ENCODE measurements at regions of chr11 and their contacts with region 1.

Region 1: DNA sequence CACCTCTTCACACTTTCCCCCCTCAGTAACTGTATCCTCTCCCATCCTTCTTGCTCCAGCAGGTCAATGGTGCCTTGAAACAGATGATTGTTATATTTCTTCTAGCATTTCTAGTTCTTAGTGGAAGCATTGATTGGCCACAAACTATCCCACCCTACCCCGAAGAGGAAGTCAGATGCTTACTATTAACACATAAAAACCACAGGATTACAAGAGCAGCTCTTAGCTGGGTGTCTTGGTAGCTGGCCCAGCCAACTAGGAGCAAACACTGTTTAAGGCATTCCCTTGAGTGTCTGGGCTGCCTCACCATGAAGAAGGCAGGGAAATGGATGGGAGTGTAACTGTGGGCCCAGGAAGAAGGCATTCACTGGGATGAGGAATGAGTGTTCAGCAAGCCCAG is 176.6 kb downstream of the GRIK4 start:
- DNase-seq: no peak
- H3K4me3 ChIP-seq: no peak overlapping the region
- H3K27ac ChIP-seq: no peak overlapping the region
- H3K4me1 ChIP-seq: no peaks in the 10 kb centered on the region
- H3K27me3 ChIP-seq: peaks cover 0 to 4% (median 0%) of the 10 kb centered on the region in 3 donors
- CTCF ChIP-seq: no peak
- EP300 ChIP-seq: no peak
- POLR2A ChIP-seq: no peak

Region 2: GRCh38 chr11:120579611-120580031 is 108.5 kb before region 1 on chr11:
- intact Hi-C with region 1: no loop called
- DNase-seq: peak; percentile 18
- H3K4me3 ChIP-seq: no peak overlapping the region
- H3K27ac ChIP-seq: no peak overlapping the region
- H3K4me1 ChIP-seq: no peaks in the 10 kb centered on the region
- H3K27me3 ChIP-seq: peaks cover 0 to 7% (median 0%) of the 10 kb centered on the region in 3 donors
- CTCF ChIP-seq: no peak
- EP300 ChIP-seq: no peak
- POLR2A ChIP-seq: no peak

Region 3: DNA sequence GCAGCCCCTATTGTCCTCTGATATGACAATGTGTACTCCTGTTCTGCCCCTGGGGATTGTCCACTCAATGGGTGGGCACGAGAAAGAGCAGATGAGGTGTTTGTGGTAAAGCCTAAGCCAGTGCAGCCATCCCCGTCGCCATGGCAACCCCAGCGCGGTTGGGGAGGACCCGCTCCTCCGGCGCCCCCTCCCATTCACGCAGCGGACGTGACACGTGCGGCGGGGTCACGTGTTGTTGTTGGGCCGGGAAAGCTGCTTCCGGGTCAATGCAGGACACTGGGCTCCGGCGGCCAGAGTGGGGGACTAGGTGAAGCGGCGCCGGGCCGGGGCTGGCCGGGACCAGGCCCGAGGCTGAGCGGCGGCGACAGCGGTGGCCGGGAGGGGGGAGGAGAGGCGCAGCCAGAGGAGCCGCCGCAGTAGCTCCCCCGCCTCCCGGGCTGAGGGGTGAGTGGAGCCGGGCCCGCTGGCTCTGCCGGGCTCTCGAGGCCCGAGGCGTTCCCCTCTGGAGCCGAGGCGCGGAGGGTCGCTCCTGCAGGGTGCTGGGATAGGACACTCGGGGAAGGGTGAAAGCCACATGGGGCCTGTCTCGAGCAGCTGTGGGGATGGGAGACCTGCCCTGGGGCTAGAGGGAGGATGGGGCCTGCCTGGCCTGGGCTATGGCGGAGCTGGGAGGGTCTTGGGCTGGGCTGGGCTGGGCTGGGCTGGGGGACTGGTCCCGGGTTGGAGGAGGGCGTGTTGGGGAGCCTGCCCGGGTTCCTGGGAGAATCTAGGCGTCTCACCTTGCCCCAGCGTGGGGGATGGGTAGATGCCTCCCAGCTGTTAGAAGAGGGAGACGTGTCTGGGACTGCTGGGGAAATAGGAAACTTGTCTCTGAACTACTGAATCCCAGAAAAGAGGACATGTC is 335.9 kb after region 1 on chr11 and contains the start of gene TBCEL:
- intact Hi-C with region 1: no loop called
- DNase-seq: peak; percentile 91
- H3K4me3 ChIP-seq: peak within 1 kb of the TSS; percentile 74 to 93 (median 86)
- H3K27ac ChIP-seq: peak within 1 kb of the TSS; percentile 56 to 75 (median 73)
- H3K4me1 ChIP-seq: peaks cover 0 to 20% (median 17%) of the 10 kb centered on the region in 4 donors
- H3K27me3 ChIP-seq: no peaks in the 10 kb centered on the region
- CTCF ChIP-seq: no peak
- EP300 ChIP-seq: peak in 1 of 4 donors; percentile 16
- POLR2A ChIP-seq: no peak
- total RNA-seq, gene TBCEL: 22.4 to 53.3 (median 39.0) TPM

Region 4: DNA sequence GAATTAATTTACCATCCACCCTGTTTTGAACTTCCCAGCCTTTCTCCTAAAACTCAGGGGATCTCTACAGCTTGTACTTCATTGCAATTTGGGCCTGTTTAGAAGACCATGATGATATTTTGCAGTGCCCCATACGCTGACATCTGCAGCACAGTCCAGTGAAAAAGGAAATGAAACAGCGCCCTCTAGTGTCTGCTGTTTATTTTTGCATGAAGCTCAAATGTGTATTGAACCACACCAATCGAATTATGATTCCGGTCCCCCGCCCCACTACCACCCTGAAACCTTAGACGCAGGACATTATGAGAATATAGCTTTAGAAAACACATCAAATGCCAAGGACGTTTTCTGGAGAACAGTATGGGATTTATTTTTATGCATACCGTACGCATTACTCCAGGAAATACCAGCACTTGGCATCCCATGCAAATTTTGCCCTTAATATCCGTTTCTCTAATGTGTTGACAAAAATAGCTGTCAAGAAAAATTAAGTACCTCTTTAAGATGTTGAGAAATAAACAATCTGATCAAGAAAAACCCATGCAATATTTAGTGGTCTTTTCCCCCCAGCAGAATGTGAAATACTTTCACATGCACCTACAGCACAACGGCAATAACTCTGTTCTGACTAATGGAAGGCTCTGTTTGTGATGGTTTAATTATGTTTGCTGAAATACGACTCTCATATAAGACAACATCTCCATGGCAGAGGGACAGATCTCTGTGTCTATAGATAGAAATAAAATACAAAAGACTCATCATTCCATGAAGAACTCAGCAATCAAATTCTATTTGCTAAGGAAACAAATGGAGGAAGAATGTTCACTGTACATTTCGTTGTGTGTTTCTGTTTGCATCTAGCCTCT is 506.8 kb after region 1 on chr11:
- intact Hi-C with region 1: loop called (anchors 5 kb)
- DNase-seq: no peak
- H3K4me3 ChIP-seq: no peak overlapping the region
- H3K27ac ChIP-seq: no peak overlapping the region
- H3K4me1 ChIP-seq: peaks cover 0 to 10% (median 2%) of the 10 kb centered on the region in 4 donors
- H3K27me3 ChIP-seq: no peaks in the 10 kb centered on the region
- CTCF ChIP-seq: peak; percentile 69 to 86 (median 74)
- EP300 ChIP-seq: no peak
- POLR2A ChIP-seq: no peak